PC-3 (cell line): ENCODE measurements at regions of chr7 and their contacts with region 1.

Region 1: GRCh38 chr7:78020136-78020873 is 221.7 kb downstream of the PHTF2 start:
- DNase-seq: peak; percentile 76
- ATAC-seq: peak; percentile 62
- H3K4me3 ChIP-seq: peak overlapping the region; percentile 66
- H3K27ac ChIP-seq: no peak overlapping the region
- H3K4me1 ChIP-seq: peaks cover 8% of the 10 kb centered on the region
- H3K27me3 ChIP-seq: peaks cover 58% of the 10 kb centered on the region
- CTCF ChIP-seq: peak; percentile 78

Region 2: DNA sequence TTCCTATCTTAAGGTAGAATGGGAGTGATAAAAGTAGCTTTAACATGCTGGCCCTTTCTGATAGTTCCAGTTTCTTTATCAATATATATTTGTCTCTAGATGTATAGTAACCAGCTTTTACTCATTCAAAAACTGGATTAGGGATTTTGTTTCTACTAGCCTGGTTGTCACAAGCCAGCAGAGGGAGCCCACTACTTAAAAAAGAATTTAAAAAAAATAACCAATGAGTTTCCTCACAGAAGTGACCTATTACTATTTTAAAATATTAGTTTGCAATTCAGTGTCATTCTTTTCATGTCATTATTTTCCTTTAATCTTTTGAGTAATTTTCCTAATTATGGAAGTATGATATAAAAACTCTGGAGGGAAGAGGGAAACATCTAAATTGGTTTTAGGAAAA is 79.7 kb before region 1 on chr7:
- CTCF ChIA-PET with region 1: interaction called, 5 read pairs
- POLR2A ChIA-PET with region 1: no interaction called
- intact Hi-C with region 1: loop called (anchors 1 kb)
- DNase-seq: peak; percentile 45
- ATAC-seq: peak; percentile 59
- H3K4me3 ChIP-seq: no peak overlapping the region
- H3K27ac ChIP-seq: no peak overlapping the region
- H3K4me1 ChIP-seq: no peaks in the 10 kb centered on the region
- H3K27me3 ChIP-seq: no peaks in the 10 kb centered on the region
- CTCF ChIP-seq: peak; percentile 79

Region 3: DNA sequence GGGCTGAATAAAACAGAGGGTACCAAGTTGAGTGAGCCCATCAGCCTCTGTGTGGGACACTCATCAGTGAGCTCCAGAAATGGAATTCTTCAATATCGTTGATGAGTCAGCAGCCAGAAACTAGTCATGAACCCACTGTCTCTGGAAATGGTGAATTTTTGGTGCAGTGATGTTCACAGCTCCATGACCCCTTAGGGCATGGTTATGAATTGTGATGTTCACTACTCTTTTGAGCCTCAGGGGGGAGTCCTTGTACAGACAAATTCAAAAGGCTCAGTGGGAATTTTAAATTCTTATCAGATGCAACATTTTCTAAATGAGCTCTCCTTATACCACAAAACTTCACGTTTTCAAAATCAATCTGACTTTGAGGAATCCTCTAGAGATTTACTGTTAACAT is 114.0 kb after region 1 on chr7:
- CTCF ChIA-PET with region 1: no interaction called
- POLR2A ChIA-PET with region 1: no interaction called
- intact Hi-C with region 1: loop called (anchors 10 kb)
- DNase-seq: peak; percentile 63
- ATAC-seq: peak; percentile 55; the same call in 1 of the 2 replicates
- H3K4me3 ChIP-seq: no peak overlapping the region
- H3K27ac ChIP-seq: no peak overlapping the region
- H3K4me1 ChIP-seq: no peaks in the 10 kb centered on the region
- H3K27me3 ChIP-seq: peaks cover 33% of the 10 kb centered on the region
- CTCF ChIP-seq: peak; percentile 65

Region 4: GRCh38 chr7:78226059-78226719 is 205.9 kb after region 1 on chr7:
- CTCF ChIA-PET with region 1: no interaction called
- POLR2A ChIA-PET with region 1: no interaction called
- intact Hi-C with region 1: loop called (anchors 5 kb)
- DNase-seq: peak; percentile 32
- ATAC-seq: no peak
- H3K4me3 ChIP-seq: no peak overlapping the region
- H3K27ac ChIP-seq: no peak overlapping the region
- H3K4me1 ChIP-seq: no peaks in the 10 kb centered on the region
- H3K27me3 ChIP-seq: peaks cover 7% of the 10 kb centered on the region; the same call in 1 of the 2 replicates
- CTCF ChIP-seq: peak; percentile 58

Region 5: DNA sequence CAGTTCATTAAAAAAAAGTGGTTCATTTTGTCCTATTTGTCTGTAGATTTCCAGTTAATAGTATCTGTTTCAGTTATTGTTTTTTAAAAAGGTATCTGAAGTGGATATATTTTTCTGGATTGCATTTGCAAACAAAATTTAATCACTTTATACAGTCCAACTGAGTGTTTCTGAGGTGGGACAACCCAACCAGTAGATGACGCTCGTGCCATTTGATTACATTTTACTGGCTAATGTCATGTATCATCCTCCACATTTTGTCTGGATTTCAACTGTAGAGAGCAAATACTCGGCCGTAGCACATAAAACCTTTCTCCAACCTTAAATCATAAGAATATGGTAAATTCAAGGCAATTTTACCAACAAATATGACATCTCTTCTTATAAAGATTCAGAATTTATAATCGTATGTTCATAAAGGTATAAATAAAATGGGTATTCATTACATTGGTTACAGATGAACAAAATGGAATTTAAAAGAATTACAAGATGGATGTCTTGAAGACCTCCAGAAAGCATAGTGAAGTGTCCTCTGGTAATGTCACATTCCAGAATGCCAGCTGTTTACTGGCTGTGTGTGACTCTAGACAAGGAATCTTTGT is 567.2 kb after region 1 on chr7:
- CTCF ChIA-PET with region 1: no interaction called
- POLR2A ChIA-PET with region 1: no interaction called
- intact Hi-C with region 1: loop called (anchors 2 kb)
- DNase-seq: peak; percentile 70
- ATAC-seq: peak; percentile 71
- H3K4me3 ChIP-seq: no peak overlapping the region
- H3K27ac ChIP-seq: no peak overlapping the region
- H3K4me1 ChIP-seq: no peaks in the 10 kb centered on the region
- H3K27me3 ChIP-seq: peaks cover 4% of the 10 kb centered on the region; the same call in 1 of the 2 replicates
- CTCF ChIP-seq: peak; percentile 88

Region 6: DNA sequence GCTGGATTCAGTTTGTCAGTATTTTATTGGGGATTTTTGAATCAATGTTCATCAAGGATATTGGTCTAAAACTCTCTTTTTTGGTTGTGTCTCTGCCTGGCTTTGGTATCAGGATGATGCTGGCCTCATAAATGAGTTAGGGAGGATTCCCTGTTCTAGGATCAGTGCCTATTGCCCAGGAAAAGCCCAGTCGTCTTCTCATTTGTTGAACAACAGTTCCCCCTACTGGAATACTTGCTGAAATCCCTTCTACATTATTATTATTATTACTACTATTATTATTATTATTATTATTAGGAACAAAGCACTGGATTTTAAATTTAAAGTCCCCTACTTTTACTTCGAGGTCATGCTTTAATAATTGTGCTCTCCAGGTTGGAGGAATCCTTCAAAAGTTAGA is 904.3 kb after region 1 on chr7:
- CTCF ChIA-PET with region 1: no interaction called
- POLR2A ChIA-PET with region 1: no interaction called
- intact Hi-C with region 1: loop called (anchors 10 kb)
- DNase-seq: peak; percentile 50
- ATAC-seq: no peak; the same call in 1 of the 2 replicates
- H3K4me3 ChIP-seq: no peak overlapping the region
- H3K27ac ChIP-seq: no peak overlapping the region
- H3K4me1 ChIP-seq: no peaks in the 10 kb centered on the region
- H3K27me3 ChIP-seq: no peaks in the 10 kb centered on the region; the same call in 1 of the 2 replicates
- CTCF ChIP-seq: peak; percentile 18; the same call in 1 of the 2 replicates